Aorta (tissue), 5 donors: ENCODE measurements at regions of chr10 and their contacts with region 1.

Region 1: GRCh38 chr10:119409866-119410299 is 132.6 kb downstream of the RGS10 start:
- DNase-seq: no peak
- ATAC-seq: peak; percentile 4
- H3K4me3 ChIP-seq: no peak overlapping the region
- H3K27ac ChIP-seq: no peak overlapping the region
- H3K4me1 ChIP-seq: no peaks in the 10 kb centered on the region
- H3K27me3 ChIP-seq: no peaks in the 10 kb centered on the region

Region 2: GRCh38 chr10:119388836-119389345 is 21.0 kb before region 1 on chr10:
- intact Hi-C with region 1: loop called in 1 of 2 experiments (anchors 1 kb)
- DNase-seq: no peak
- ATAC-seq: no peak
- H3K4me3 ChIP-seq: no peak overlapping the region
- H3K27ac ChIP-seq: no peak overlapping the region
- H3K4me1 ChIP-seq: no peaks in the 10 kb centered on the region
- H3K27me3 ChIP-seq: no peaks in the 10 kb centered on the region